Dorsolateral prefrontal cortex (tissue), 120 donors: ENCODE measurements at regions of chr3 and their contacts with region 1.

Region 1: GRCh38 chr3:43998836-43999727 is 242.6 kb upstream of the TOPAZ1 start:
- DNase-seq: peak in 6 of 10 donors; percentile 66 to 83 (median 72)
- H3K4me3 ChIP-seq: peak overlapping the region; percentile 44 to 79 (median 64)
- H3K27ac ChIP-seq: peak overlapping the region in 50 of 59 donors; percentile 1 to 90 (median 75)
- H3K27me3 ChIP-seq: peaks cover 0 to 93% (median 54%) of the 10 kb centered on the region in 45 donors
- CTCF ChIP-seq: no peak

Region 2: GRCh38 chr3:43838877-43839276 is 160.2 kb before region 1 on chr3:
- intact Hi-C with region 1: no loop called
- DNase-seq: no peak
- H3K4me3 ChIP-seq: no peak overlapping the region
- H3K27ac ChIP-seq: no peak overlapping the region
- H3K27me3 ChIP-seq: peaks cover 0 to 3% (median 0%) of the 10 kb centered on the region in 45 donors
- CTCF ChIP-seq: no peak

Region 3: GRCh38 chr3:43894176-43895049 is 104.7 kb before region 1 on chr3:
- intact Hi-C with region 1: loop called in 1 of 2 experiments (anchors 5 kb)
- DNase-seq: peak in 8 of 10 donors; percentile 22 to 65 (median 53)
- H3K4me3 ChIP-seq: peak overlapping the region; percentile 35 to 72 (median 56)
- H3K27ac ChIP-seq: peak overlapping the region in 36 of 59 donors; percentile 4 to 77 (median 55)
- H3K27me3 ChIP-seq: peaks cover 0 to 13% (median 0%) of the 10 kb centered on the region in 45 donors
- CTCF ChIP-seq: peak in 1 of 56 donors; percentile 10

Region 4: DNA sequence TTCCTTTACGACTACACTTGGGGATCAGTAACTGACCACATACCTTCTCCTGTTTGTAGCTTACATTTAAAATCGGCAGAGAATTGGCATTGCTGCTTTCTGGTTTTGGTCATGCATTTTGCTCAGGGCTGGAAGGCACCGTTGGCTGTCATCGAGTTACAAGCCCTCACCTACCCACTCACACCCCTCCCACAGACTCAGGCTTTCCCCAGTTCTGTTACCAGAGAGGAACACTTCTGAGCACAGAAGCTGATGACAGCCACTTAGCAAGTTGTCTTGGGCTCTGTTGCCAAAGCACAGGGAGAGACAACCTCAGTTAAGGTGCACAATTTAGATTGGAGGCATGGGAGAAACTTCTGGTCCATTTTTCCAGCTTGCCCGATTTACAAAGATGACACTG is 37.8 kb after region 1 on chr3:
- intact Hi-C with region 1: no loop called
- DNase-seq: peak in 5 of 10 donors; percentile 44 to 71 (median 66)
- H3K4me3 ChIP-seq: no peak overlapping the region
- H3K27ac ChIP-seq: peak overlapping the region in 2 of 59 donors; percentile 45 to 55
- H3K27me3 ChIP-seq: peaks cover 0 to 12% (median 0%) of the 10 kb centered on the region in 45 donors
- CTCF ChIP-seq: no peak

Region 5: DNA sequence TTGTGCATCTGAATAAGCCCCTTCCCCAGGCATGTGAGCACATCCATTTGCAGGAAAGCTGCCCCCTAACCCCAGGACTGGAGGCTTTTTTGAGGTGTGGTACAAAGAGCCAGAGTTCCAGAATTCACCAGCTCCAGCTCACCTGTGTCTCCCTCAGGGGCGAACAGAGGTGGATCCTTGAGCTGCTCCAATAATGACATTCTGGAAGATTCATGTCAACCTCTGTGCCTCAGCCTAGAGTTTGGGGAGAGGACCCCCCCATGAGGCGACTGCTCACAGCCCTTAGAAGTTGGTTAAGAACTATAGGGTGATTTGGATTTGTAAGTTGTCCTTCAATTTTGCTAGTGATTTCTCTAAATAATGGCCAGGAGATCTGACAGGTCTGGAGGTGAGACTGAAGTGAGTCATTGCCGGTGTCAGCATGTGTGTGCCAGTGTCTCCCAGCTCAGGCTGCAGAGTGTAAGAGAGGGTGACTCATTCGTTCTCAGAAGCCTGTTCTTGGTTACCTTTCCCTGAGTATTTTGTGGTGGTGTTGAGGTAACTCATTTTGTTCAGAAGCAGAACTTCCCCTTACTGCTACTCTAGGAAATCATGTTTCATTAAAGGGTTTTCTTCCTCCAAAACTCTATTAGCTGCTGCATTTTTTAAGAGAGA is 105.7 kb after region 1 on chr3:
- intact Hi-C with region 1: loop called in 1 of 2 experiments (anchors 10 kb)
- DNase-seq: no peak
- H3K4me3 ChIP-seq: no peak overlapping the region
- H3K27ac ChIP-seq: no peak overlapping the region
- H3K27me3 ChIP-seq: no peaks in the 10 kb centered on the region
- CTCF ChIP-seq: no peak

Region 6: DNA sequence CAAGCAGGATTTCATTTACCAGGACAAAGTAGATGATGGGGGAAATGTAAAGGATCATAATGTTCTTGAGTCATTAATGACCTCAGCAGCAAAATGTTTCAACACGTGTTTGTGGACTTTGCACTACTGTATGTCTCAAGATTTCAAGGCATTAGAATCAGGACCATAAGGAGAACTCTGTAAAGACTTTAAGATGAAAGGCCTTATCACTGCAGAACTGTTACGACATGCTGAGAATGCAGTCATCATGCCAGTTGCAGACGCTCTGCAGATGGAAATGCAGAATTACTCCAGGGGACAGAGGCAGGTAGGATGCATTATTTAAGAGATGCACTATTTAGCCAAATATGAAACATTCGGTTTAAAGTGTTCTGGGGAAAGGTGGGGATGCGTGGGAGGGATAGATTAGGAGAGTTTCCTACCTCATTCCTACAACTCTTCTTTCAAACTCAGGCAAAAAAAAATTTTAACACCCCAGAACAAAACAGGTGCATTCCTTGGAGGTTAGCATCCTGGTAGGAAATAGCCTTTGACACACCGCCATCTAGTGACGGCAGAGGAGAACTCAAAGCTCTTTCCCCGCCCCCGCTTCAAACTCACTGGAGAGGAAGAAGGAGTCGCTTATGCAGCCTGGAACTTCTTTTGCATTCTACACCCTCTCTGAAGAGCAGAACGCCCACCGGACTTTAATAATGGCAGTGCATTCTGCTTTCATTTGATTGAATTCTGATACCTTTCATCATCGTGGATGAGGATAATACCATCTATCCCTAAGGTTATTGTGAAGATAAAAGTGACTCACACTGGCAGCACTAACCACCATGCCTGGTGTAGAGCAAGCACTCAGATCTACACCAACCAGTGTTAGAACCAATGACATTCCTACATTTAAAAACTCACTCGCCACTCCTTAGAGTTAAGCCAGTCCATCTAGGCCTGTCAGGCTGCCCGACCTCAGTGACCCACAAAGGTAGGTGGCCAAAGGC is 199.5 kb after region 1 on chr3:
- intact Hi-C with region 1: loop called (anchors 5 kb)
- DNase-seq: peak; percentile 26 to 78 (median 72)
- H3K4me3 ChIP-seq: no peak overlapping the region
- H3K27ac ChIP-seq: no peak overlapping the region
- H3K27me3 ChIP-seq: peaks cover 0 to 5% (median 0%) of the 10 kb centered on the region in 45 donors
- CTCF ChIP-seq: peak; percentile 58 to 93 (median 85)